ENCODE measurements at regions of chr7 and their contacts with region 1.

Region 1: DNA sequence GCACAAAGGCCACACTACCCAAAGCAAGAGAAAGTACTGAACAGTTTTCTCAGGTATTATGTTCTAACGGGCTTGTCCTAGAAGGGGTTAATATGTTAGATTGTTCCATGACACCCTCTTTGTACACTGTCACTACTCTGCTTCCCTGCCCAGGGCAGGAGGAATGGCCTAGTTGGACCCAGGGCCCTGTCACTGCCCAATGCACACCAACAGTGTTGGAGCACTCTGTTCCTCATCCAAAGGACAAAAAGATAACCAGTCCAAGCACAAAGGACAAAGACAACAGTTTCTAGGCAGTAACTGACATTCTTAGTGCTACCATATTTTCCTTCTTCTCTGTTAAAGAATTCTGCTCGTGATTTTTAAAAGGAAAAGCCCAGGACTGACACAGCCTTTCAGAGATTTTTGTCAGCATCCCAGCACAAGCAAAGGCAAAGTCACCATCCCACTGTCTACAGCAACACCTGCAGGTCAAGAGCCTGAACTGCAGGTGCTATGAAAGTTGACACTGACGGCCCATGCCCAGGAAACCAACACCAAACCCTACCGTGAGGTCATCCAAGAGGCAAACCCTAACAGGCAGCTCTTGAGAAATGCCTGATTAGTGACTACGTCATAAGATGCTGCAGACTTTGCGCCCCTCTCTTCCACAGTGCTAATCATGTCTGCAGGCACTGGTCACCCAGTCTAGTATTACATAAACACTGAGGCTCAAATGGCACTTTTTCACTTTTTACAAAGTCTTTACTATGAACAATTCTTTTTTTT is 13.2 kb downstream of the NUDCD3 start:
- DNase-seq: peak; percentile 88
- H3K4me3 Mint-ChIP-seq: no peak overlapping the region
- H3K27ac Mint-ChIP-seq: no peak overlapping the region
- H3K4me1 Mint-ChIP-seq: peaks cover 22% of the 10 kb centered on the region
- H3K27me3 Mint-ChIP-seq: no peaks in the 10 kb centered on the region
- CTCF ChIP-seq: peak; percentile 91

Region 2: GRCh38 chr7:44212018-44212417 is 265.2 kb before region 1 on chr7:
- CTCF ChIA-PET with region 1: interaction called, 10 read pairs
- POLR2A ChIA-PET with region 1: no interaction called
- intact Hi-C with region 1: no loop called
- DNase-seq: no peak
- H3K4me3 Mint-ChIP-seq: no peak overlapping the region
- H3K27ac Mint-ChIP-seq: no peak overlapping the region
- H3K4me1 Mint-ChIP-seq: no peaks in the 10 kb centered on the region
- H3K27me3 Mint-ChIP-seq: no peaks in the 10 kb centered on the region
- CTCF ChIP-seq: no peak

Region 3: DNA sequence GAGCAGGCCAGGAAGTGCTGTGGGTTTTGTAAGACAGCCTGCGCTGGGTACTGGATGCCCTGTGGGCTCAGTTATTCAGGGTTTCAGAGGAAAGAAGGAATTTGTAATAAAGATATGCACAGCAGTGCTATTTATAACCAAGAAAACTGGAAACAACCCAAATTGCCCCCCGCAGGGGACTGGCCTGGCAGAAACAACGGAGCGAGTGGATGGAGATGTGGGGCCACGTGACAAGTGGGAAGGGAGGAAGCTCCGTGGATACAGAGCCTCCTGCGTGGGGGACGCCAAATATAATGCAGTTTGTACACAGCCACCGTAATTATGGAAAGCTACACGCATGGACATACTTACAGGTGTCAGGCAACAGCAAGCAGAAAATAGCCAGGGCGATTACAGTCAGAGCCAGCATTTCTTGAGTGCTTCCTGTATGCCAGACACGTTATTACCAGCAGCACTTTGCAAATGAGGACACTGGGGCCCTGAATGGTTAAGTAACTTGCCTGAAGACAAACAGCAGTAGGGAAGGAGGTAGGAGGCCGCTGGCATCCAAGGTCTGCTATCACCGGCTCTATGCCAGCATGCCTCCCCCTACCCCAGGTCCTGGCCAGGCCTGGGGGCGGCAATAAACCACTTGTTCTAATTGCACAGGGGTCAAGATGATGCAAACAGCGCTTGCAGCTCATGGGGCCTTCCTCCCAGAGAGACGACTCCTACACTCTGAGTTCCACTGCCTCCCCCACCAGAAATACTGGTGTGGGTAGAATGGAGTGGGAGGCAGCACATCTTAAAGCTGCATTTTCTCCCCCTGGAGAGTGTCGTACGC is 143.1 kb before region 1 on chr7:
- CTCF ChIA-PET with region 1: no interaction called
- POLR2A ChIA-PET with region 1: no interaction called
- intact Hi-C with region 1: no loop called
- DNase-seq: no peak
- H3K4me3 Mint-ChIP-seq: no peak overlapping the region
- H3K27ac Mint-ChIP-seq: no peak overlapping the region
- H3K4me1 Mint-ChIP-seq: no peaks in the 10 kb centered on the region
- H3K27me3 Mint-ChIP-seq: peaks cover 38% of the 10 kb centered on the region
- CTCF ChIP-seq: no peak

Region 4: DNA sequence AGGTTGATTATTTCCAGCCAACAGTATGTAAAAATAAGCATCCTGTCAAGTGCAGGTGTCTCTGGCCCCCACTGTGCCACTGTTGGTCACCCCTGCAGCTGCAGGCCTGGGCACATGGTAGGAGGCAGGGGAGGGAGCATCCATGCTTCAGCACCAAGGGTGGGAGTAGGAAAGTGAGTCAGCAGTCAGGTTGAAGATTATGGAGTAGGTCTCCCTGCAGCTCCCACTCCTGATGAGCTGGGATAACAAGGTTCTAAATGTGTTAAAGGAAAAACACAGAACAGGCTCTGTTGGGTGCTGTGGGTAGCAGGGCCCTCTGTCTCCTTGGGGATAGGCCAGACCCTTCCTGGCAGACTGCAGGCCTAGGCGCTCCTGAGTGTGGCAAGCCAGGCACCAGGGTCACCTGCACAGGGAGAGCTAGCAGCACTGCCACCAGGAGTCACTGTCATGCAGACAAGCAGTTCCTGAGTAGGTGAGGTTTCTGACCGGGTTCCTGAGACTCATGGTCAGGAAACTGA is 46.1 kb before region 1 on chr7:
- CTCF ChIA-PET with region 1: no interaction called
- POLR2A ChIA-PET with region 1: no interaction called
- intact Hi-C with region 1: no loop called
- DNase-seq: no peak
- H3K4me3 Mint-ChIP-seq: no peak overlapping the region
- H3K27ac Mint-ChIP-seq: no peak overlapping the region
- H3K4me1 Mint-ChIP-seq: no peaks in the 10 kb centered on the region
- H3K27me3 Mint-ChIP-seq: no peaks in the 10 kb centered on the region
- CTCF ChIP-seq: no peak